Keratinocyte (primary cell): ENCODE measurements at regions of chr2 and their contacts with region 1.

Region 1: DNA sequence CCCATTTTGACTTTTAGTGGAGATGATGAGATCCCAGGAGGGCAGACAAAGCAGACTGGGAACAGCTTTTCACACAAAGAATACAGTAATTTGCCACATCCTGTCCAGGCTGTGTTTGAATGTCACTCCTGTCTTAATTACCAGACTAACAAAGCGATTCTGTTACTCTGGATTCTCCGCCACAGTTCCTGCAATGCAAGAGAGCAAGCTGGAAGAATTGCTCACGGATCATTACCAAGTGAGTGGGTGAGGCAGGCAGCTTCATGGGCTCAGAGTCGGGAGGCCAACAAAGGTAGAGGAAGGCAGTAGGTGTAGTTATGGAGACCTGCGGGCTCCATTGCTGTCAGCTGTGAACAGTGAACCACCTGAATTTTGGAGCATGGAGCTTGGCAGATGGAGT is 250.5 kb upstream of the ATP5MC3 start:
- DNase-seq: no peak
- H3K4me3 ChIP-seq: no peak overlapping the region
- H3K27ac ChIP-seq: no peak overlapping the region
- H3K4me1 ChIP-seq: no peaks in the 10 kb centered on the region
- H3K27me3 ChIP-seq: no peaks in the 10 kb centered on the region
- CTCF ChIP-seq: no peak

Region 2: DNA sequence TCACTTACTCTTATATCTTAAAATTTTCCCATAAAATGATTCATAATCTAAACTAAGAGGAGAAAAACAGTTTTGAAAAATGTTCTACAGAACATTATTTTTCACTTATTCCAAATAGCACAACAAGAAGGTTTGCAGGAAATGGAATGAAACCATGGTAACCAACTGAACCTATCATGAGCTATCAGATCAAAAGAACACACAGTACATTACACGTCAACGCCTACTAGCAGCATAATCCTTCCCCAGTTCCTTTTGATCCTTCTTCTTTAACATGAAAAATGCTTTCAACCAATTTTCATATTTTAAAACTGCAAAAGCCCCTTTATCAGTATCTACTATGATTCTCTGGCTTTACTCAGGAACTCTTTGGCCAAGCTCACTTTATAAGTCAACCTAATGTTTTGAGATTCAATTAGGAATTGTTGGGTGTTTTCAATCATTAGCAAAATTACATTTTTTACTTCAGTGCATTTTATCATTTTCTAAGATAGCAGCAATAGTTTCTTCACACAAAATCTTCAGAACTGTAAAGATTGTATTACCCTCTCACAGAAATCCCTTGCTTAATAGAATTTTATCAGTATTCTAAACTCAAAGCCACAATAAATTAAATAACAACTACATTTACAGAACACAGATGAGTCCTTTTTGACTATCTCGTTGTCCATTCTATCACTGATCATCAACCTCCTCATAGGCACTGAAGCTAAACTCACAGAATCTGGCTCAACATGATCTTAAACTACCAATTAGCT is 529.3 kb before region 1 on chr2:
- dilution Hi-C with region 1: no loop called
- DNase-seq: no peak
- H3K4me3 ChIP-seq: no peak overlapping the region
- H3K27ac ChIP-seq: no peak overlapping the region
- H3K4me1 ChIP-seq: no peaks in the 10 kb centered on the region
- H3K27me3 ChIP-seq: no peaks in the 10 kb centered on the region
- CTCF ChIP-seq: no peak

Region 3: DNA sequence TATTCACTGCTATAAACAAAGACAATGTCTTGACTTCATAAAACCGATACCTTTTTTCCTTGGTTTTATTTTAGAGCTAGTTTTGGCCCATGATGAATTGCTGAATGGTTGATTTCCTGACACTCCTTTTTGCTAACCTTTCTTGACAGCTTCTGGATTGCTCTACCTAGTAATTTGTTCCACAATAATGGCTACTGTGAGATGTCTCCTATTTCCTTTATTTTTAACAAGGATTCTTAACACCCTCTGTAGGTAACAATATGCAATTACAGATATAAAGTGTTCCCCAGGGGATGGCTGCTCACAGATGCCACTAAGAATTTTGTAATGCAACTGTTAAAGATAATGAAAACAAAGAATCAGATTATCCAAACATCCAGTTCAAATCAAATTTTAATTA is 149.7 kb before region 1 on chr2:
- dilution Hi-C with region 1: no loop called
- DNase-seq: no peak
- H3K4me3 ChIP-seq: no peak overlapping the region
- H3K27ac ChIP-seq: no peak overlapping the region
- H3K4me1 ChIP-seq: no peaks in the 10 kb centered on the region
- H3K27me3 ChIP-seq: no peaks in the 10 kb centered on the region
- CTCF ChIP-seq: peak in 2 of 3 experiments; percentile 19 to 32

Region 4: DNA sequence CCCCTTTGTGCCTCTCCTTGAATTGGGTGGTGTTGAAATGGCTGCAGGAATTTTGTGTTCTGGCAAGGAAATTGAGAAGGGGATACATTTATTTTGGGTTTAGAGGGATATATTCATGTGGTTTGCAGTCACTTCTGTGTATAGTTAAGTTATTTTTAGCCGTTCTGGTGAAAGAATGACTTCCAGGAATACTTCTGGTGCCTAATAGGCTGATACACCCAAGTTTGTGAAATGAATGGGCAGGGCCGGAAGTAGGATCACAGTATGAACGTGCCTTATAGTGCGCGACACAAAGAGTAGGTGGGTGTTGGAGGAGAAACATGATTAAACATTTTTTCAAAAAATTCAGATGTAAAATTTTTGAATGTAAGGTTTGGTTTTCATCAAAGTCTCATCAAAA is 81.9 kb before region 1 on chr2:
- dilution Hi-C with region 1: no loop called
- DNase-seq: no peak
- H3K4me3 ChIP-seq: no peak overlapping the region
- H3K27ac ChIP-seq: no peak overlapping the region
- H3K4me1 ChIP-seq: no peaks in the 10 kb centered on the region
- H3K27me3 ChIP-seq: no peaks in the 10 kb centered on the region
- CTCF ChIP-seq: no peak

Region 5: DNA sequence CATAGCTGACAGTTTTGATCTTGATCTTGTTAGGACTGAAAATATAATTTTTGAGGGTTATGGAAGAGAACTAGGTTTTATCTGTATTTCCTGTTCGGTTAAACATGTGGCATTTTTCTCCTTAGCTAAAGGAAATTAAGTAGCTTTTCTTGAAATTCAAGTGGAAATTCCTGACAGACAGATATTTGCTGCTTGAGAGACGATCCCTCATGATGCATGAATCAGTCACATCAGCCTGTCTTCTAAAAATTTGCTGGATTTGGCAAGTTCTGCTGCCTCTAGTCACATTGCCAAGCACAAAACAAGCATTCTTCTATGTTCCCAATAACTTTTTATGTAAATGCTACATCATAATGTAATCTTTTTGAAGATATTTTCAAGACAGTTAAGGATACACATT is 48.7 kb before region 1 on chr2:
- dilution Hi-C with region 1: loop called (anchors 10 kb)
- DNase-seq: no peak
- H3K4me3 ChIP-seq: no peak overlapping the region
- H3K27ac ChIP-seq: no peak overlapping the region
- H3K4me1 ChIP-seq: no peaks in the 10 kb centered on the region
- H3K27me3 ChIP-seq: no peaks in the 10 kb centered on the region
- CTCF ChIP-seq: no peak

Region 6: DNA sequence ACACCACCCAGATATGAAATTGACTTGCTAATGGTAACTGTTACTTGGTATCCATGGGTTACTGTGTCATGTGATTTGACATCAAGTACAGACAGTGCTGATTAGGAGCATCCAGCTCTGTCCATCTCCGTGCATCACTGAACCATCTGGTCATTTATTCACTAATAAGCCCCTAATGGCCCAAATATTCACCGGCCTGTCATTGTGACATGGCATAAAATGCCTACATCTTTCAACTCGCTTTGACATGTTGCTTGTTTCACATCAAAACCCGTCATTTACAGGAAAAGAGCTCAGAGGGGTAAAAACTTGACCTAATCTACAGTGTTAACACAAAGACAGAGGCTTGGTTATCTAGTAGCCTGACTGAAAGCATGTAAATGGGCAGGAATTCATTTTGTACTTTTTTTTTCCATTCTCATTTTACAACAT is 58.4 kb after region 1 on chr2:
- dilution Hi-C with region 1: no loop called
- DNase-seq: no peak
- H3K4me3 ChIP-seq: no peak overlapping the region
- H3K27ac ChIP-seq: no peak overlapping the region
- H3K4me1 ChIP-seq: no peaks in the 10 kb centered on the region
- H3K27me3 ChIP-seq: no peaks in the 10 kb centered on the region
- CTCF ChIP-seq: no peak